Activated B cell treated with CpG ODN at 0.5 μM for 24 hours (primary cell): ENCODE measurements at regions of chr20 and their contacts with region 1.

Region 1: GRCh38 chr20:57654363-57654997 is 34.3 kb upstream of the ZBP1 start:
- DNase-seq: peak; percentile 55
- ATAC-seq: peak; percentile 96
- H3K4me3 Mint-ChIP-seq: no peak overlapping the region
- H3K27ac Mint-ChIP-seq: peak overlapping the region; percentile 52
- H3K4me1 Mint-ChIP-seq: peaks cover 29% of the 10 kb centered on the region
- H3K27me3 Mint-ChIP-seq: no peaks in the 10 kb centered on the region
- CTCF ChIP-seq: peak; percentile 93

Region 2: DNA sequence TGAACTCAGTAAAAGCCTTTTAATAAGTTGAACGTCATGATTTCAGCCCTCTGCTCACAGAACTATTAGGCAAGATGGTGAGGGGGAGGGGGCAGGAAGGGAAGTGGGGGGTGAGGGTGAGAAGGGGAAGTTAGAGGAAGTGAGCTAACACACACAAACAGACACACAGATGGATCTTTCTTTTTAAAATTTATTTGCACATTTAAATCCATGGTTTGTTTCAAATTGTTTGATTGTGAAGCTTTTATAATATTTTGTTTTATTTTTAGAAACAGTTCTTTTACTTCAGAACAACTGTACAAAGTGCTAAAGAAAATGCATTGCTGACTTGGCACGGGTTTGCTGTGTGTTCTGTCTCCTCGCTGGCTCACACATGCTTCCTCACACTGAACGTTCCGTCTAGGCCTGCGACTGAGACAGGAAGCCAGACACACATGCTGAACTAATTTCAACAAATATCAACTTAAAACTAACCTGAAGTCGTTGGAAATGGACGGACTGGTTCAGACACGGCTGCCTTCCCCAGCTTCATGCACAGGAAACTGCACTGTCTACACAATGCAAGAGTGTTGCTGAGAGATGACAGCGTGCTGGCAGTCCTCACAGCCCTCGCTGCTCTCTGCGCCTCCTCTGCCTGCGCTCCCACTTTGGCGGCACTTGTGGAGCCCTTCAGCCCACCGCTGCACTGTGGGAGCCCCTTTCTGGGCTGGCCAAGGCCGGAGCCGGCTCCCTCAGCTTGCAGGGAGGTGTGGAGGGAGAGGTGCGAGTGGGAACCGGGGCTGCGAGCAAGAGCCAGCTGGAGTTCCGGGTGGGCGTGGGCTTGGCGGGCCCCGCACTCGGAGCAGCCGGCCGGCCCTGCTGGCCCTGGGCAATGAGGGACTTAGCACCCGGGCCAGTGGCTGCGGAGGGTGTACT is 26.2 kb before region 1 on chr20:
- CTCF ChIA-PET with region 1: interaction called, 30 read pairs
- POLR2A ChIA-PET with region 1: interaction called, 9 read pairs
- intact Hi-C with region 1: no loop called
- DNase-seq: no peak
- ATAC-seq: peak; percentile 81
- H3K4me3 Mint-ChIP-seq: peak overlapping the region; percentile 81
- H3K27ac Mint-ChIP-seq: peak overlapping the region; percentile 98
- H3K4me1 Mint-ChIP-seq: peaks cover 39% of the 10 kb centered on the region
- H3K27me3 Mint-ChIP-seq: peaks cover 12% of the 10 kb centered on the region
- CTCF ChIP-seq: no peak

Region 3: DNA sequence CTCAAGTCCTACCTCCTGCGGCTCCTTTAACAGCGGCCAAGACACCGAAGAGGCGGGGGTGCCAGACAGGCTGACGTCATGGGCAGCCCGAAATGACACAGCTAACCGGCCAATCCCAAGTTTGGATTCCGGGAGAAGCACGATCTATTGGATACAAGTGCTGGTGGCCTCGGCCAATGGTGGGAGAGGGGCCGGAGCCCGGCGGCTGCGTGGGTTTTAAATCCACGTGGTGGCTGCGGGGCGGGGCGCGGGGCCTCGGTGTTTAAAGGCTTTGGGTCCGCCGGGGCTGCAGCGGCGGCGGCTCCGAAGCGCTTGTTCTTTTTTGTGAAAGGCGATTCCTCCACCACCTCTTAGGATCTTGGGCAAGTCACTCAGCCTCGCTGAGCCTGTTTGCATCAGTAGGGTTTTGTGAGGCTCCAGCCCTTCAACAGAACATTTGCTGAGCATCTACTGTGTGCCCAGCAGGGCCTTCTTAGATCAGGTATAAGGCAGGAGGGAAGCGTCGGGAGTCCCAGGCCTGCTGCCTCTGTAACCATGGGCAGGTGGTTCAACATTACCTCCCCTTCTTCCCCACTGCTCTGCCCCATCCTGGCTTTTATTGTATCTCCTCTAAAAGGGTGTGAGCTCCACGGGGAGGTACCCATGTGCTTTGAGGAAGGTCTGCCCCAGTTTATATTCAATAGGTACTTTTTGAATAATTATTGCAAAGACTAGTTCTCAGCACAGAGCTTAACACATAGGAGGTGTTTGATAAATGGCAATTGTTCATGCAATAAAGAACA is 64.2 kb after region 1 on chr20:
- CTCF ChIA-PET with region 1: no interaction called
- POLR2A ChIA-PET with region 1: no interaction called
- intact Hi-C with region 1: loop called (anchors 2 kb)
- DNase-seq: peak; percentile 85
- ATAC-seq: peak; percentile 100
- H3K4me3 Mint-ChIP-seq: peak overlapping the region; percentile 68
- H3K27ac Mint-ChIP-seq: peak overlapping the region; percentile 56
- H3K4me1 Mint-ChIP-seq: peaks cover 9% of the 10 kb centered on the region
- H3K27me3 Mint-ChIP-seq: peaks cover 3% of the 10 kb centered on the region
- CTCF ChIP-seq: no peak

Region 4: GRCh38 chr20:57977569-57977968 is 323.1 kb after region 1 on chr20:
- CTCF ChIA-PET with region 1: no interaction called
- POLR2A ChIA-PET with region 1: no interaction called
- intact Hi-C with region 1: no loop called
- DNase-seq: no peak
- ATAC-seq: no peak
- H3K4me3 Mint-ChIP-seq: no peak overlapping the region
- H3K27ac Mint-ChIP-seq: no peak overlapping the region
- H3K4me1 Mint-ChIP-seq: no peaks in the 10 kb centered on the region
- H3K27me3 Mint-ChIP-seq: peaks cover 10% of the 10 kb centered on the region
- CTCF ChIP-seq: no peak

Region 5: GRCh38 chr20:57999465-58000111 is 345.1 kb after region 1 on chr20:
- CTCF ChIA-PET with region 1: no interaction called
- POLR2A ChIA-PET with region 1: no interaction called
- intact Hi-C with region 1: loop called (anchors 5 kb)
- DNase-seq: no peak
- ATAC-seq: peak; percentile 14
- H3K4me3 Mint-ChIP-seq: peak overlapping the region; percentile 41
- H3K27ac Mint-ChIP-seq: no peak overlapping the region
- H3K4me1 Mint-ChIP-seq: peaks cover 17% of the 10 kb centered on the region
- H3K27me3 Mint-ChIP-seq: peaks cover 14% of the 10 kb centered on the region
- CTCF ChIP-seq: no peak

Region 6: DNA sequence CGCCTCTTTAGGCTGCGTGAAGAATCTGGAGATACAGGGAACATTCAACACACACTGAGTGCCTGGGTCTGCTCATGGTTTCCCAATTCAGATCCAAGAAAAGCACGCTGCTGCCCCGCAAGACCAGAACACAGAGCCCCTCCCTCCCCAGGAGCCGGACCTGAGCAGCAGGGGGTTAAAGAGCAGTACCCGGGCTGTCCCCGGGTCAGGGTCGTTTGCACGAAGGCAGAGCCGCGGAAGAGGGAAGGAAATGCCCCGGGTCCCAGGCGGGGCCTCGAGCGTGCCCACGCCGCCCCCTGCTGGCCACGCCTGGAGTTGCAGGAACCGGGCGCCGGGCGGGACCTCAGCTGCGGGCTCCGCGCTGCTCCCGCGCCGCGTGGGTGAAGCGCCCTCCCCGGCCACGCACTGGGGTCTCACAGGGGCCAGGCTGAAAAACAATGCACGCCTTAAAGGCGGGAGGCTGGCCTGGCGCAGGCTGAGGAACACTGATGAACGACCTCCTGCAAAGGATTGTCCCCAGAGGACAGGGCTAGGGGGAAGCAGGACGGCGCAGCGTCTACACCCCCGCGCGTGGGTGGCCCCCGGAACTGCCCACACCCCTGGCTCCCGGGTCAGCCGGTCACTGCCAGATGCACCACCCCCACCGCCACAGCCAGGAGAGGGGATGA is 525.1 kb after region 1 on chr20:
- CTCF ChIA-PET with region 1: interaction called, 22 read pairs
- POLR2A ChIA-PET with region 1: interaction called, 3 read pairs
- intact Hi-C with region 1: loop called (anchors 1 kb)
- DNase-seq: peak; percentile 75
- ATAC-seq: peak; percentile 96
- H3K4me3 Mint-ChIP-seq: no peak overlapping the region
- H3K27ac Mint-ChIP-seq: no peak overlapping the region
- H3K4me1 Mint-ChIP-seq: peaks cover 9% of the 10 kb centered on the region
- H3K27me3 Mint-ChIP-seq: peaks cover 36% of the 10 kb centered on the region
- CTCF ChIP-seq: peak; percentile 94

Region 7: DNA sequence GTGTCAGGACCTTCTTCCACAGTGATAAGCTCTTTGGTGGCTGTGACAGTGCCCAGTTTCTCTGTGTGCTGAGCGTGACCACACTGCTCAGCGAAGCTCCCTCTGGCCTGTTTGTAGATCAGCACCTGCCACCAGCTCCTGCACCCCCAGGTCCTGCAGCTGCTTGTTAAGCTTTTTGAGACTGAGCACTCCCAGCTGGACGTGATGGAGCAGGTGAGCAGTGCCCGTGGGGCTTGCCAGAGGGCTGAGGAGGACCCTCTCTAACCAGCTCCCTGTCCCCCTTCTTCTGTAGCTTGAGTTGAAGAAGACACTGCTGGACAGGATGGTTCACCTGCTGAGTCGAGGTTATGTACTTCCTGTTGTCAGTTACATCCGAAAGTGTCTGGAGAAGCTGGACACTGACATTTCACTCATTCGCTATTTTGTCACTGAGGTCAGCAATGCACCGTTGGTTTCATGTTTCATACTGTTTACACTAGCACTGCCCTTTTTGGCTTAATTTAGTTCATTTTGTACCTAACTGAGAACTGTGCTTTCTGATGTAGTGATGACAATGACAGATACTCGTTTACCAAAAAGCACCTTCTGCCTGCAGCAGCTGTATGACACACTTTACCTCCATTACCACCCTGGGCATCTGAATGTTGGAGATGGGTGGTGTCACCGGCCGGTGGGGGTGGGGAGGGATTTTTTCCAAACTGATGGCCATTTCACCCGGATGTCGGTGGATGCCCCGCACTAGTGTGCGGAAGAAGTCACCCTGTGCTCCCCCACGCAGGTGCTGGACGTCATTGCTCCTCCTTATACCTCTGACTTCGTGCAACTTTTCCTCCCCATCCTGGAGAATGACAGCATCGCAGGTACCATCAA is 1339.1 kb after region 1 on chr20:
- CTCF ChIA-PET with region 1: no interaction called
- POLR2A ChIA-PET with region 1: no interaction called
- intact Hi-C with region 1: no loop called
- DNase-seq: no peak
- ATAC-seq: no peak
- H3K4me3 Mint-ChIP-seq: no peak overlapping the region
- H3K27ac Mint-ChIP-seq: peak overlapping the region; percentile 63
- H3K4me1 Mint-ChIP-seq: peaks cover 44% of the 10 kb centered on the region
- H3K27me3 Mint-ChIP-seq: no peaks in the 10 kb centered on the region
- CTCF ChIP-seq: no peak